ENCODE measurements at regions of chr20 and their contacts with region 1.

Region 1: DNA sequence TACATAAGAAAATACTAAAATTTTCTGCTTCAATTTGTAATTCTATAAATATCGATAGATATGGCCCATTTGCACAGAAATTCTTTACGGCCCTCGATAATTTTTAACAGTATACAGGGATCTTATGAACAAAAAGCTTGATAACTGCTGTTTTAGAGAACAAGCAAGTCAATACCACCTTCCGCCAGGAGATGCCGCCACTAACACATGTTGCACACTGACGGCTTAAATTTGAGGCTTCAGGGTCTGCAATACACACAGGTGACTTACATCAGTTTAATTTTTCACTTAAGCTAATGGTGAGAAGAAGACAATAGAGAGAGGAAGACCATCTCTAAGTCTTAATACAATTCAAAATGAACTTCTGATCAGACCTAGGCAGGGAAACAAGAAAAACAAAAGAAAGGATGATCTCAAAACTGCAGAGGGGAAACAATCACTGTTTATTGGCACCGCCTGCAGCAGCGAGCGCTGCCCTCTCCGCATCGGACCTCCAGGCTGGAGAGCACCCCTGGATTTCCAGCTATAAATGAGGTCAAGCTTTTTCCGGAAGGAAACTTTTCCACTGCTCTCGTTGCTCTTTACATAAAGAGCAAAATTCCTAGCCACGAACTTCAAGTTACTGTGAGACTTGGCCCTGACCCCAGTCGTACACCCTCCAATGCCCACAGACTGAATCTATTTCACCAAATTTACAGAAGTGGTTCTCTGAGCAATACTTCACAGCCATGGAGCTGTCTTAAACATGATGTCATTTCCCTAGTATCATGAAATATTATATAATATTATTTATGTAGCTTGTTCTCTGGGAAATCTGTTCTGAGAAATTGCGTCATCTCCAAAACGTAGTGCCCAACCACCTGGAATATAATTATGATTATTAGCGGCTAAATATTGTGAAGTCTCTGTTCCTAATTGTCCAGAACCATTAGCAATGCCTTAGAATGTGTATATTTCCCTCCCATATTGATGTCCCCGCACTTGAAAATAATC is 54.1 kb downstream of the OTOR start:
- DNase-seq: no peak
- H3K4me3 ChIP-seq: no peak overlapping the region
- CTCF ChIP-seq: peak; percentile 80

Region 2: DNA sequence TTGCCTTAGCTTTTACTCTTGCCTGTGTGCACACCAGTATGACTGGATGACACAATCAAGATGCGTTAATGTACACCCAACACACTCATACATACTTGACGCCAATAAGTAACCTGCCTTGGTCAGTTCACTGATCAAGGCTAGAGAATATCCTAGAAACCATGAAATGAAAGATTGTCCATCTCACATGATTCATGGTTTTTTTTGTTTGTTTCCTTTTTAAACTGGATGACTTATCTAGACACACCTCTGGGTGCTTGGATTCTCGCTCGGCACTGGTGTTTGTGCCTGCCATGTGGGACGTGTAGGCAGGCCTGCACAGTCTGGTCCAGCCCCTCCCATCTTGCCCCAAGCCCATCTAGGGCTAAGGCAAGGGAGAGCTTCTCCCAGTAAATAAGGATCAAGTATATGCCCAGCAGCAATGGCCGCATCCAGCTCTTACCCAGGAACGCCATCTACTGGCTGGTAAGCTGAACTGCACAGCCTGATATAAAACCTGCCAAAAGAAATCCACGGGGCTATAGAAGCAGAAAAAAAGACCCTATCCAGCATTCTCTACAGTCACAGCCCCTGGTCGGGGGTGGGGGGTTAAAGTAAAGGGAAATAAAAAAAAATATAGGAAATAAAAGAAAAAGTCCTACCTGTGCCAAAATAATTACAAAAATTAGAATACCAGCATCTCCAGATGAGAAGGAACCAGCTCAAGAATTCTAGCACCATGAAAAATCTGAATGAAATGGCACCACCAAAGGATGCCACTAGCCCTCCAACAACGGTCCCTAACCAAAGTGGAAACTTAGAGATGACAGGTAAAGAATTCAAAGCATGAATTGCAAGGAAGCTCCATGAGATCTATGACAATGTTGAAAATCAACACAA is 19.2 kb after region 1 on chr20:
- CTCF ChIA-PET with region 1: interaction called, 241 read pairs
- POLR2A ChIA-PET with region 1: no interaction called
- DNase-seq: no peak
- H3K4me3 ChIP-seq: no peak overlapping the region
- CTCF ChIP-seq: peak; percentile 79

Region 3: DNA sequence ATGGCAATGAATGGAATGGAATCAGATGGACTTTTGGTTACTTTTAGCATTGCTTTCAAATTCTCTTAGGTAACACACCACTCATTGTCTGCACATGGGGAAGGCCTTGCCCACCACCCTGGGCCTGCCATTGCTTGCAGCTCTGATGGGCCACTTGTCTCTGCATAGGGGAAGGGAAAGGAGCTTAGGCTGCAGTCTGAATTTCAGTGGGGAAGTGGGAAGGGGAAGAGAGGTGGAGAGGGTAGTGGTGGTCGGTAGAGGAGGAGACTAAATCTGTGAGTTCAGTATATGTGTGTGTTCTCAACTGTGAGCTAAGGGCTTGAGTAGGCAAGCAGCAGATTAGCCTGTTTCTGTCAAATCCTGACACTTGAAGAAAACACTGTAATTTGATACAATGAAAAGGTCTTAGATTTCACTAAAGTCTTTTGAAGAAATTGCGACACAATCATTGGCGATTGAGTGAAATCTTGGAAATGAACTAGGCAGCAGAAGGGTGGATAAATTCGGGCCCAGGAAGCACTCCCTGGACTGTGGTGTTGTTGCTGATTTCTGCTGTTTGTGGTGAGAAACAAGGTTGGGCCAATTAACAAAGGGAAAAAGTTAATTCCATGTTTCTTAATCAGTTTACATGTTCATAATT is 26.6 kb after region 1 on chr20:
- CTCF ChIA-PET with region 1: interaction called, 14 read pairs
- POLR2A ChIA-PET with region 1: no interaction called
- DNase-seq: no peak
- H3K4me3 ChIP-seq: no peak overlapping the region
- CTCF ChIP-seq: no peak

Region 4: GRCh38 chr20:16904750-16905149 is 102.5 kb after region 1 on chr20:
- CTCF ChIA-PET with region 1: interaction called, 10 read pairs
- POLR2A ChIA-PET with region 1: no interaction called
- DNase-seq: no peak
- H3K4me3 ChIP-seq: no peak overlapping the region
- CTCF ChIP-seq: no peak

Region 5: GRCh38 chr20:16966276-16966880 is 164.2 kb after region 1 on chr20:
- CTCF ChIA-PET with region 1: no interaction called
- POLR2A ChIA-PET with region 1: no interaction called
- DNase-seq: no peak
- H3K4me3 ChIP-seq: no peak overlapping the region
- CTCF ChIP-seq: no peak

Region 6: DNA sequence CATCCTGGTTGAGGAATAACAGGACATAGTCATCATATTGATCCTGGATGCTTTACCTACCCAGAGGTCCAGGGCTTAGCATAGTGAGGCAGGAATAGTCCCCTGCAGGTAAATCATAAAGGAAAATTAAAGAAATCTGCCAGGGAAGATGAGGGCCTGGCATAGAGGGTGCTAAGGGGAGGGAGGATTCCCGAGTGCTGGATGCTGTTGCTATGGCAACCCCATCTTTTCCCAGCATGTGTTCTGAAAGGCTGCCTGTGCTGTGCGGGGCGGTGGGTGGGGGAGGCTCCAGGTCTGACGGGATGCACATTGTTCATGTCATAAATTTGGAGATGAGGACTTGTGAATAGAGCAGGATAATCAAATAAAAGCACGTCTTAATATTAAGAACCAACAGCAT is 212.0 kb after region 1 on chr20:
- CTCF ChIA-PET with region 1: no interaction called
- POLR2A ChIA-PET with region 1: no interaction called
- DNase-seq: no peak
- H3K4me3 ChIP-seq: no peak overlapping the region
- CTCF ChIP-seq: no peak

Region 7: DNA sequence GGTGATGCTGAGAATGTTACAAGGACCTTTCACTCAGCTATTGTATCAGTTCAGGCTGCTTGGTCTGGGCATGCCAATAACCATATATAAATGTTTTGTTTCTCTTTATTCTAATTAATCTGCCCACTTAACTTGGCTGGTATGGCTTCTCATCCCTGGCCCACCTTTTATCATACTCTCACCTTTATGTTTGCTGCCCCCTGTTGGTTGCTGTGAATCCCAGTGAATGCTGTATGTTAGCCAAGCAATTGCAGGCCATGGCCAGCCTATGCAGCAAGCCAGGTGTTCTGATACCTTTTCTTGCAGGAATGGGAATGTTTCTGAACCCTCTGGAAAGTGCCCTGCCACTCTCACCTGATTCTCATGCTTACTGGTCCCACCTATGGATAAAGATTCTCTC is 479.3 kb after region 1 on chr20:
- CTCF ChIA-PET with region 1: interaction called, 55 read pairs
- POLR2A ChIA-PET with region 1: no interaction called
- DNase-seq: no peak
- H3K4me3 ChIP-seq: no peak overlapping the region
- CTCF ChIP-seq: peak; percentile 47

Region 8: GRCh38 chr20:17421493-17421892 is 619.3 kb after region 1 on chr20:
- CTCF ChIA-PET with region 1: interaction called, 563 read pairs
- POLR2A ChIA-PET with region 1: no interaction called
- DNase-seq: no peak
- H3K4me3 ChIP-seq: no peak overlapping the region
- CTCF ChIP-seq: no peak

Region 9: DNA sequence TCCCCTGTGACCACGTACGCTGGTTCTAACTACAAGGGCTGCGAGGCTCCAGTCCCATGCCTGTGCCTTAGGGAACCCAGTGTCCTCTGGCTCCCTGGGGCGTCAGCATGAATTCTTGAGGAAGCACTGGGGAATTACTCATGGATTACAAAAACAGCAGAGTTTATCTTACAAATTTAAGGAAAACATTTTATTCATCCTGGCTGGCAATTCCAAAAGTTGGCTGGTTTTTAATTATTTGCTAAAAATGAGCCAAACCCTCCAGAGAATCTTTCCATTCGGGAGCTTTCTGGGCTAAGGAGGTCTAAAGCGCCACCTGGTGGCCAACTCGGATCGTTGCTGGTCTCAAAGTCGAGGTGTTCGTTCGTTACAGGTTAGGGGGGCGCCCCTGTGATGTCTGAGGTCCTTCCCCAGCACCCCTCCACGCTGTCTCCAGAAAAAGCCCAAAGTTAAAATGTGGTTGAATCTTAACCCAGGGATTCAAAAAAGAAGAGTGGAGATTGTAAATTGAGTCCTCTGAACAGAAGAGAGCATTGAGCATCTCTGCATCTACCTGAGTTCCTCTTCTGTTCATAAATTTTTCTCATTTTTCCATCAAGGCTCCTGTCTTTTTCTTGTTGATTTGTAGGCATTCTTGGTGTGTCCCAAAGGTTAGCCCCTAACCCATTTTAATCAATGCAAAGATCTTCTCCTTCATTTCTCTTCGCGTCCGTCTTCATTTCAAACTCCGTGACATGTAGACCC is 629.6 kb after region 1 on chr20:
- CTCF ChIA-PET with region 1: interaction called, 563 read pairs
- POLR2A ChIA-PET with region 1: interaction called, 3 read pairs
- DNase-seq: no peak
- H3K4me3 ChIP-seq: no peak overlapping the region
- CTCF ChIP-seq: peak; percentile 73

Measured in AG04449 (cell line).